OCI-LY7 (cell line): ENCODE measurements at regions of chr19 and their contacts with region 1.

Region 1: DNA sequence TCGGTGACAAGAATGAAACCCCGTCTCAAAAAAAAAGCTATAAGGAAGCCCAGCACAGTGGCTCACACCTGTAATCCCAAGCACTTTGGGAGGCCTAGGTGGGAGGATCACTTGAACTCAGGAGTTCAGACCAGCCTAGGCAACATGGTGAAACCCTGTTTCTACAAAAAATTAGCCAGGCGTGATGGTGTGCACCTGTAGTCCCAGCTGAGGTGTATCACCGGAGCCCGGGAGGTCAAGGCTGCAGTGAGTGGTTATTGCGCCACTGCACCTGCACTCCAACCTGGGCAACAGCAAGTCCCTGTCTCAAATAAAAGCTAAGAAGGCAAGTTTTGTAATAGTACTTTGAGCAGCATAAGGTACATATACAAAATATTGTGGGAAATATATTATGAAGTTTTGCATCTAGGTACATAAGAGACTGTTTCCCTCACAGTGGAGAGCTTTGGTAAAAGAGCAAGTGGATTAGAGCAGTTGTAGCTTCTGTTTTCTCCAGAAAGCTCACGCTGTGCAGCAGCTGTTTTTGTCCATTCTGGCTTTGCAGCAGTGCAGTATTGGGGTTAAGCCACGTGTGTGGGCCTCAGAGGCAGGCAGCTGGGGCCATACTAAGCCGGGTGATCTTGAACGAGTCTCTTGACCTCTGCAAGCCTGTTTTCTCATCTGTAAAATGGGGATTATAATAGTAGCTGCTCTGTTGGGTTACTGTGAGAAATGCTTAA is 35.4 kb downstream of the ARHGAP35 start:
- DNase-seq: peak; percentile 85
- H3K4me3 ChIP-seq: peak overlapping the region; percentile 29
- H3K27ac ChIP-seq: peak overlapping the region; percentile 90
- H3K4me1 ChIP-seq: peaks cover 69% of the 10 kb centered on the region
- CTCF ChIP-seq: no peak

Region 2: GRCh38 chr19:46863818-46864611 is 32.2 kb before region 1 on chr19:
- CTCF ChIA-PET with region 1: no interaction called
- POLR2A ChIA-PET with region 1: interaction called, 5 read pairs
- intact Hi-C with region 1: loop called (anchors 2 kb)
- DNase-seq: no peak
- H3K4me3 ChIP-seq: peak overlapping the region; percentile 87
- H3K27ac ChIP-seq: no peak overlapping the region
- H3K4me1 ChIP-seq: peaks cover 63% of the 10 kb centered on the region
- CTCF ChIP-seq: no peak

Region 3: DNA sequence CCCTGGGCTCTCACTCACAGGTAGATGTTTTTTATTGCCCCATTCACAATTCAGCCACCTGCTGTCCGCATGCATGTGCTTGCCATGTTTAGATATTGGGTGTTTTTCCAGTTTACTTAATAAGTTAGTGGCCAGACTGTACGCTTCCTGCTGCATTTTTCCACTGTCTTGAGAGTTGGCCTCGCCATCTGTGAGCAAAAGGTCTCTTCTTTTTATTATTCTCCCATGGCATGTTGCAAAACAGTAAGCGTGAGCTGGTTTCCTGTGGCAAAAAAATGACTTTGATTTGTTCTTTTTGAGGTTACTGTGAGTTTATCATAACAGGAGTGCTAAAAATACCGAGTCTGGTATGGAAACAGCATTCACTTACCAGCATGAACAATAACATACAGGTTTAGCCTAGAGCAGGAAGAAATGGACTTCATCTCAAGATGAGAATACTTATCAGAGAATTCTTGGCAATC is 280.4 kb after region 1 on chr19:
- CTCF ChIA-PET with region 1: no interaction called
- POLR2A ChIA-PET with region 1: no interaction called
- intact Hi-C with region 1: no loop called
- DNase-seq: no peak
- H3K4me3 ChIP-seq: no peak overlapping the region
- H3K27ac ChIP-seq: no peak overlapping the region
- H3K4me1 ChIP-seq: no peaks in the 10 kb centered on the region
- CTCF ChIP-seq: no peak